ENCODE measurements at regions of chr17 and their contacts with region 1.

Region 1: DNA sequence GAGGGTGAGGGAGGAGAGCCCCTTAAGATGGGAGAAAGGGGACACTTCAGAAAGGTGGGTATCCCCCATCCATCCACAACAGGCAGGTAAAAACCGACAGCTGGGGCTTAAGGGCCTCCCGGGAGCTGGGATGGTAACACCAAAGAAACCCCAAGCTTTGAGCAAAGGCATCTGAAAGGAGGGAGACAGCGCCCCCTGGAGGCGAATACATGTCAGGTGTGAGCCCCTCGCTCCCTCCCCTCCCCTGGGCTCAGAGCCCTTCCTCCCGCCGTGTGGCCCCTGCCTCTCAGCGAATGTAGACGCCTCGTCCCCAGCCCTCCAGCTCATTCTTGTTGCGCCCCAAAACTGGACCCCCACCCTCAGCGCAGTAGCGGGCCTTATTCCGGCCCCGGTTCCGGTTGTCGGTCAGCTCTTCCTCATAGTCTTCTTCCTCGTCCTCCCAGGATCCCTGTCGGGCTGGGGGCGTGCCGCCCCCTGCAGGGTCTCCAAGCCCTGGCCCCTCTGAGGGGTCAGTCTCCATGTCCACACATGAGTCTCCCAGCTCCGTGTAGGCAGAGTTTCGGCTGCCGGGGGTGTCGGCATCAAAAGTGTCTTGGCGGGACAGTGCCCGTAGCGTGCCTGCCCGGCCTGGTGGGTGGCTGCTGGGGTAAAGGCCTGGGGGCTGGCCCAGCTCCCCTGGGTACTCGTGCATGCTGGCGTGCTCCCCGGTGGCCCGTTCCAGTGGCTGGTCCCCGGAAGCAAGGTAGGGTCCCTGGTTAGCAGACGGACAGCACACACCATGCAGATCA is 9.1 kb upstream of the ARL5C start:
- DNase-seq: peak; percentile 46 to 93 (median 75)
- ATAC-seq: peak; percentile 81 to 93 (median 85)
- H3K4me3 ChIP-seq: no peak overlapping the region
- H3K4me3 Mint-ChIP-seq: no peak overlapping the region
- H3K27ac ChIP-seq: no peak overlapping the region
- H3K27ac Mint-ChIP-seq: no peak overlapping the region
- H3K4me1 ChIP-seq: peaks cover 0 to 21% of the 10 kb centered on the region in 2 experiments
- H3K4me1 Mint-ChIP-seq: peaks cover 11 to 20% (median 16%) of the 10 kb centered on the region in 3 donors
- H3K27me3 ChIP-seq: peaks cover 0 to under 1% of the 10 kb centered on the region in 2 experiments
- H3K27me3 Mint-ChIP-seq: peaks cover 0 to 2% of the 10 kb centered on the region in 2 donors

Region 2: GRCh38 chr17:38947189-38947588 is 227.9 kb before region 1 on chr17:
- CTCF ChIA-PET with region 1: no interaction called
- POLR2A ChIA-PET with region 1: interaction called in 1 of 2 experiments, 17 read pairs
- DNase-seq: no peak
- ATAC-seq: no peak
- H3K4me3 ChIP-seq: no peak overlapping the region
- H3K4me3 Mint-ChIP-seq: no peak overlapping the region
- H3K27ac ChIP-seq: no peak overlapping the region
- H3K27ac Mint-ChIP-seq: no peak overlapping the region
- H3K4me1 ChIP-seq: no peaks in the 10 kb centered on the region
- H3K4me1 Mint-ChIP-seq: no peaks in the 10 kb centered on the region
- H3K27me3 ChIP-seq: no peaks in the 10 kb centered on the region
- H3K27me3 Mint-ChIP-seq: no peaks in the 10 kb centered on the region